Activated T-helper 1 cell treated with anti-CD3 and anti-CD28 coated beads, Interleukin-12 subunit alpha, Interleukin-12 subunit beta, Interleukin-2, Interleukin-4 antibody, amounts not matched to agents 30 ng/mL and 10 ng/mL and 1 ng/mL, durations not matched to agents 14 hours and 24 hours and 36 hours (primary cell): ENCODE measurements at regions of chr7 and their contacts with region 1.

Region 1: DNA sequence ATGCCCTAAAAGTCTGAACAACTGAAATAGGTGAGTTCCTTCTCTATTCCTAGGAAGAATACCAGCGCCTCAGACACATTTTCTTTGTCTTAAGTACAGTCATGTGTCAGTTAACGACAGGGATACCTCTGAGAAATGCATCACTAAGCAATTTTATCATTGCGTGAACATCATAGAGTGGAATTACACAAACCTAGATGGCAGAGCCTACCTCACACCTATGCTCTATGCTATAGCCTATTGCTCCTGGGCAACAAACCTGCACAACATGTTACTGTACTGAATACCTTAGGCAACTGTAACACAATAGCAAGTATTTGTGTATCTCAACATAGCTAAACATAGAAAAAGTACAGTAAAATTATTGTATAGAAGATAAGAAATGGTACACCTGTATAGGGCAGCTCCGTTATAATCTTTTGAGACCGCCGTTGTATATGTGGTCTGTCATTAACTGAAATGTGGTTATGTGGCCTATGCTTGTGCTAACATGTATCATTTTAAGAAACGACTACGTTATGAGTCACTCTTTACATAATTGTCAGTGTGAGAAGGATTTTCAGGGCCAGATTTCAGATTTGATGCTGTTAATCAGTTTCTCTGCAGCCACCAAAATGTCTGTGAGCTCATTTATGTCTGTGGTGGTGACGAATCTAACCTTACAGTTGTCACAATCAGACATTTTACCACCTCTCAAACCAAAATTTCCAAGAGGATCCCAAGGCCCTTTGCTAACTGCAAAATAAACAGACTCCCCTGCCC is 66.1 kb upstream of the STK17A start:
- DNase-seq: no peak
- H3K4me3 Mint-ChIP-seq: no peak overlapping the region
- H3K27ac Mint-ChIP-seq: no peak overlapping the region
- H3K4me1 Mint-ChIP-seq: peaks cover 6% of the 10 kb centered on the region
- H3K27me3 Mint-ChIP-seq: peaks cover 2% of the 10 kb centered on the region

Region 2: GRCh38 chr7:43572516-43573049 is 55.8 kb after region 1 on chr7:
- intact Hi-C with region 1: loop called (anchors 5 kb)
- DNase-seq: peak; percentile 48
- H3K4me3 Mint-ChIP-seq: no peak overlapping the region
- H3K27ac Mint-ChIP-seq: no peak overlapping the region
- H3K4me1 Mint-ChIP-seq: peaks cover 35% of the 10 kb centered on the region
- H3K27me3 Mint-ChIP-seq: peaks cover 3% of the 10 kb centered on the region